ENCODE measurements at regions of chr12 and their contacts with region 1.

Region 1: GRCh38 chr12:4526923-4527546 is 11.7 kb upstream of the RAD51AP1 start:
- DNase-seq: no peak
- ATAC-seq: no peak

Region 2: DNA sequence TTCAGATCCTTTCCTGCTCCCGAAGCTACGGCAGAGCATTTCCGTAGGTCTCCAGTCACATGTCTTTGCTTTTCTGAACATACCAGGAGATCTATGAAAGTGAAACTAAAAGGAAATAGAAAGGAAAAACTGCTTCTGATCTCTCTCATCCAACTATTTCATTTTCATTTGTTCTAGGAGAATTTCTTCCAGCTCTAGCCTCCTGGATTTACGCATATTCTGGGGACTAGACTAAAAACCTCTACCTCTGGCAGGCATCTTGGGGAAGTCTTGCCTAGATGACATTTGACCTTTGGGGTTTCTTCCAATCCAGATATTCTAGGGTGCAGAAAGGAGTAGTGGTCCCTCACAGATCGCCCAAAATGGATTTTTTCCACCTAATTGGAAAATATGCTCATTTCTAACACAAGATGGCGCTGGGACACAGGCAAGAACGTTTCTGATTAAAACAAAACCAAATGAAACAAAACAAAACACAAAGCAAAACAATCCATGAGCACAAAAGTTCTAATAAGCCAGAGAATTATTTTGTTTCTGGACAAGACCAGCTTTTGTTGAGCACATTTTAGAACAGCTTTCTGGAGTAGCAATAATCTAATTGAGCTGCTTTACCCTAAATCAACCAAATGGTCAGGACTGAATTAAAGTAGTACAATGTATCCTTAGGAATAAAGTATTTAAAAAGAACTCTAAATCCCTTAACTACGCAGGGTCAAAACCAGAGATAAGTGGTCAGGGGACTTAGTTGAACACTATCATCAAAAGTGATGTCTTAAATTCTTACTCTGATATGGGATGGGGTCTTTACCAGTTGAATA is 641.5 kb before region 1 on chr12:
- intact Hi-C with region 1: loop called in 1 of 2 experiments (anchors 5 kb)
- DNase-seq: no peak
- ATAC-seq: peak in 1 of 2 donors; percentile 27

Region 3: DNA sequence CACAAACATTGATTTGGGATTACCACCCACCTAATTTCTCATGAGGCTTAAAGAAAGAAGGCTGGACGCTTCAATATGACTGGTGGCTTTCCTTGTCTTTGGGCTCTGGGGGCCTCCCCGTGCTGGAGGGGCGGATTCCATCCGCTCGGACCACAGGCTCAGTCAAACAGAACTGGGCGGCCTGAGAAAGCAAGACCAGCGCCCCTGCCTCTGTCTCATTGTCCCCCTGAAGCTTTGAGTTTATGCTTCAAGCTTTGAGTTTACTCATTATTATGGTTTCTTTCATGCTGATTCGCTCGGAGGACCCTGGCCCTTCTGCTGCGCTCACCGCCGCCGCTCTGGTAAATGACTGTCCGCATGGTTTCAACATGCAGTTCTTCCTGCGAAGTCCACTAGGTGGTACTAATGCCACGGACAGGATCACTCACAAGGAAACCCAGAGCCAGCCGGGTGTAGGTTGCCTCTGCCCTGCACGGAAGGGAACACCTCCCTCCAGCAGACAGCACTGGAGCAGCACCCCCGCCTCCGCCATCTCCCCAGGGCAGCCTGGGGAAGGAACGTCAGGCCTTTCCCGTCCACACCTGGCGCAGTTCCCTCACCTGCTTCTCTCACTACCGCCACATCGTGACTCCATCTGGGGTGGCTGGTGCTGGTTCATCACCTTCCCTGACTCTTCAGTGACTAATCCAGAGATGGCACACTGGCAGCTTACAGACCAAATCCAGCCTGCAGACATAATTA is 219.3 kb before region 1 on chr12:
- intact Hi-C with region 1: loop called in 1 of 2 experiments (anchors 2 kb)
- DNase-seq: peak; percentile 66
- ATAC-seq: peak; percentile 87 to 91

Region 4: DNA sequence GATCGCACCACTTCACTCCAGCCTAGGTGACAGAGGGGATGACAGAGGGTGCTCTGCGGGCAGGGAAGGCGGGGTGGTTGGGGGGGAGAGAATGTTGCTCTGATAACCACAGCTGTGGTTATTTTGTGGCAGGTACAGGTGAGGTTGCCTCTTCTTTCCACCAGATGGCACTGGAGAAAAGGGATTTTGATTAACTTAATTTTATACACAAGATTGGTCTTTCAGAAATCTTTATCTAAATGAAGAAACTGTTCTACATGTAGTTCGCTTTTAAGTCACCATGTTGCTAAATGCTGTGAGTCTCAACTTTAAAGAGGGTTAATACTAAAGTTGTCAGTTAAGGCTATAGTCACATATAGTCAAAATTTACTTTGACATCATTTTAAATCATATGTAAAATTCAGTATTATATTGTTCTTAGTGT is 173.2 kb before region 1 on chr12:
- intact Hi-C with region 1: loop called in 1 of 2 experiments (anchors 2 kb)
- DNase-seq: no peak
- ATAC-seq: no peak

Region 5: GRCh38 chr12:4471256-4471655 is 55.8 kb before region 1 on chr12:
- intact Hi-C with region 1: no loop called
- DNase-seq: no peak
- ATAC-seq: no peak